Dorsolateral prefrontal cortex (tissue), 120 donors: ENCODE measurements at regions of chr7 and their contacts with region 1.

Region 1: DNA sequence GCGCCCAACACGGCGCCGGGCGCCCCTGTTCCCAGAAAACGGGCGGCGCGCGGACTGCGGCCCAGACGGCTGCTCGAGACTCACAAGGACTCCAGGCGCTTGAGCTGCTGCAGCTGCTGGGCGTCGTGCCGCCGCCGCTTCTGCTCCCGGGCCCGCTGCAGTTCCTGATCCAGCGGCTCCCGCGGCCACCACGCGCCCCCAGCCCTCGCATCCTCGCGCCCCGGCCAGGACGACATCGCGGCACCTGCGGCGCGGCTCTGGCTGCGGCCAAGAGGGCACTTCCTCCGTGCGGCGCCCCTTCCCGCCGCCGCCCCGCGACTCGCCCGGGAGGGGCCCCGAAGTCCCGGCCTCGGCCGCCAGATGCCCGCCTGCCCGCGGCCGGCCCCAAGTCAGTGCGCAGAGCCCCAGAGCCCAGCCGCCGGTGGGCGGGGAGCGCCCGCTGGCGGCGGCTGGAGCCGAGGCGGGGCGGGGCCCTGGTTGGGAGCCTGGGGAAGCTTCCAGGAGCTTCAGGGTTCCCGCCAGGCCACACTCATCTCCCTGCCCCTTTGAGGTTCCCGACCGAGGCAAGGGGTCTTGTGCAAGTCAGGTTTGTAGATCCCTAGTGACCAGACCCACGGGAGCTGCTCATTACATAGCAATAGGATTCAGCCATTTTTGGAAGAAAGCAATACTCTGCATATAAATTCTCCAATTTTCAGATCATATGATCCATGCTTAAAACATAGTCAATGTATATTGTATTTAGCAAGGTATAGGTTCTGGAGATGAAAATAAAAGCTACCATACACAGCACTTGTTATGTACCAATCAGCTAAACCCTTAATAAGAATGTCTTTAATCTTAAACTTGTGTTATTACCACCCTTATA is 14.2 kb upstream of the FKBP9 start:
- DNase-seq: peak; percentile 54 to 88 (median 70)
- H3K4me3 ChIP-seq: peak overlapping the region; percentile 58 to 91 (median 81)
- H3K27ac ChIP-seq: peak overlapping the region; percentile 60 to 99 (median 95)
- H3K27me3 ChIP-seq: no peaks in the 10 kb centered on the region
- CTCF ChIP-seq: peak in 54 of 56 donors; percentile 38 to 93 (median 68)

Region 2: GRCh38 chr7:32765185-32765584 is 177.8 kb before region 1 on chr7:
- intact Hi-C with region 1: no loop called
- DNase-seq: no peak
- H3K4me3 ChIP-seq: no peak overlapping the region
- H3K27ac ChIP-seq: no peak overlapping the region
- H3K27me3 ChIP-seq: no peaks in the 10 kb centered on the region
- CTCF ChIP-seq: no peak

Region 3: DNA sequence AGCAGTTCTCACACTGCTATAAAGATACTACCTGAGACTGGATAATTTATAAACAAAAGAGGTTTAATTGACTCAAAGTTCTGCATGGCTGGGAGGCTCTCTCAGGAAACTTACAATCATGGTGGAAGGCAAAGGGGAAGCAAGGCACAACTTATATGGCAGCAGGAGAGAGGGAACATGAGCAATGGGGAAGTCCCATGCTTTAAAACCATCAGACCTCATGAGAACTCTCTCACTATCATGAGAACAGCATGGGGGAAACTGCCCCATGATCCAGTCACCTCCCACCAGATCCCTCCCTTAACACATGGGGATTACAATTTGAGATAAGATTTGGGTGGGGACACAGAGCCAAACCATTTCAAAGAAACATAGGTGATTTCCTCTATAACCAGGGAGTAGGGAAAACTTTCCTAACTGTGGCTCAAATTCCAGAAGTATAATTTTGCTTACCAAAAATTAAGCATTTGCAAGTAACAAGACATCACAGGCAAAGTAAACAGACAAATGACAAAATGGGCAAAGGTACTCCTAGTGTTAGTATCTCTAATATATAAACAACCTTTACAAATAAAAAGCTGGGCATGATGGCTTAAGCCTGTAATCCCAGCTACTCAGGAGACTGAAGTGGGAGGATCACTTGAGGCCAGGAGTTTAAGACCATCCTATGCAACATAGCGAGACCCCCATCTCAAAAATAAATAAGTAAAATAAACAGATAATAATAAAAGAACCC is 139.4 kb before region 1 on chr7:
- intact Hi-C with region 1: loop called (anchors 5 to 10 kb)
- DNase-seq: no peak
- H3K4me3 ChIP-seq: no peak overlapping the region
- H3K27ac ChIP-seq: no peak overlapping the region
- H3K27me3 ChIP-seq: no peaks in the 10 kb centered on the region
- CTCF ChIP-seq: no peak

Region 4: GRCh38 chr7:32846701-32847100 is 96.3 kb before region 1 on chr7:
- intact Hi-C with region 1: loop called in 1 of 2 experiments (anchors 1 kb)
- DNase-seq: peak; percentile 46 to 93 (median 76)
- H3K4me3 ChIP-seq: peak overlapping the region in 26 of 59 donors; percentile 2 to 43 (median 18)
- H3K27ac ChIP-seq: no peak overlapping the region
- H3K27me3 ChIP-seq: no peaks in the 10 kb centered on the region
- CTCF ChIP-seq: peak; percentile 34 to 96 (median 87)

Region 5: GRCh38 chr7:32891800-32892520 is 51.1 kb before region 1 on chr7:
- intact Hi-C with region 1: loop called (anchors 1 kb)
- DNase-seq: peak; percentile 89 to 97 (median 94)
- H3K4me3 ChIP-seq: peak overlapping the region; percentile 51 to 98 (median 77)
- H3K27ac ChIP-seq: peak overlapping the region; percentile 80 to 100 (median 97)
- H3K27me3 ChIP-seq: no peaks in the 10 kb centered on the region
- CTCF ChIP-seq: peak in 9 of 56 donors; percentile 4 to 20 (median 7)

Region 6: GRCh38 chr7:33143996-33144718 is 201.1 kb after region 1 on chr7:
- intact Hi-C with region 1: no loop called
- DNase-seq: no peak
- H3K4me3 ChIP-seq: peak overlapping the region in 16 of 59 donors; percentile 4 to 46 (median 16)
- H3K27ac ChIP-seq: peak overlapping the region in 43 of 59 donors; percentile 1 to 92 (median 61)
- H3K27me3 ChIP-seq: no peaks in the 10 kb centered on the region
- CTCF ChIP-seq: no peak